A673 (cell line): ENCODE measurements at regions of chr13 and their contacts with region 1.

Region 1: DNA sequence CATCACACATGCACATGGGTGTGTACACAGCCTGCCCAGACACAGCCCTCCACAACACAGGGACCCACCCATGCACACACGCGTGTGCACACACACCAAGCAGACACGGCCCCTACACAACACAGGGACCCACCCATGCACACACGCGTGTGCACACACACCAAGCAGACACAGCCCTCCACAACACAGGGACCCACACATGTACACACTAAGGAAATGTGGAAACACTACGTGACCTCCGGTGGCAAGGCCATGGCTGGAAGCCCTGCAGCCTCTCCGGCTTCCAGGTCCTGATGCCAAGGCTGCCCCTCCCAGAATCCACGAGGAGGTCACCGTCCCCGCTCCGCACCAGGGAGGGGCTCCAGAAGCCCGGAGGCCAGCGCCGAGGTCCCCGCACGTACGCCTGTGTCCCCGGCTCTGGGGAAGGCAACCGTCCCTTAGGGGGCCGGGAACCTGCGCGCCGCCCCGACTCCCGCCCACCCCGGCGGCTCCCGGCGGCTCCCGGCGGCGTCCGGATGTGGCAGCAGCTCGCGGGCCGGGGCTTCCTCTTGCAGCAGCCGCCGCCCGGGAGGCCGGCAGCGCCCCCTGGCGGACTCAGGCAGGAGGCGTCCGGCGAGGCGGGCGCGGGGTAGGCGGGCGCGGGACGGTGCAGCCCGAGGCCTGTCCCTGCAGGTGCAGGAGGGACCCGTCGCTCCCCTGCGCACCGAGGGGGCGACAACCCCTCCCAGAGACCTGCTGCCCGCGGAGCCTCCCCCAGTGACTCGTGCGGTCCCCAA is 29.8 kb upstream of the GRTP1 start:
- DNase-seq: peak; percentile 88
- H3K4me3 ChIP-seq: peak overlapping the region; percentile 57
- H3K27ac ChIP-seq: peak overlapping the region; percentile 60
- H3K4me1 ChIP-seq: no peaks in the 10 kb centered on the region
- H3K27me3 ChIP-seq: no peaks in the 10 kb centered on the region
- CTCF ChIP-seq: peak; percentile 59

Region 2: DNA sequence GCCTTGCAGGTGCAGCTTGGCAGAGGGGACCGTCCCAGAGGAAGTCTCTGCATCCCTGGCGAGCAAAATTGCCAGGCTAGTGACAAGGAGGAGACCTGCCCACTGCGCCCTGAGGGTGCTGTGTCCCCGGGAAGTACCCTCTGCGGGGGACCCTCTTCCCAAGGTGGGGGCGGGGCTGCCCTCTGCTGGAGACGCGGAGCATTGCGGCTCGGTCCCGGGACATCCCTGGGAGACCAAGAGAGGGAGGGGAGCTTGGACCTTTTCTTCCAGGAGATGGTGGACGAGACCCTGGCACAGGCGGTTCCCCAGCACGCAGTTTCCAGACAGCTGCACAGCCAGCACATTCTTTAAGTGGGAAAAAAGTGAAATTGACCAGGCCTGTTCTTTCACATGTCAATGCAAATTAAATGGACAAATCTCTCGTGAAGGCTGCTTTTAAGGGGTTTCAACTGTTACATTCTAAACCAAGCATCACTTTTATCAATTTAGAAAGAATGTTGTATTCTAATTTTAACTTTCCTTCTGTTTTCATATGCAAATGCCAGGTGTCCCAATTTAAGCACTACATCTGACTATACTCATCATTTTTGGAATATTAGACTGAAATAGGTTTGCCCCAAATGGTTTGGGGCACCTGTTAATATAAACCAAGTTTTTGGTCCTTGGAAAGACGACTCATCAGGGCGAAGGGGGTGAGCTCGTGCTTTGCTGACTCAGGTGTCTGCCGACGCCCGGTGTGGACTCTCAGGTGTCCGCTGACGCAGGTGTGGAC is 364.1 kb before region 1 on chr13:
- CTCF ChIA-PET with region 1: interaction called, 4 read pairs
- POLR2A ChIA-PET with region 1: no interaction called
- intact Hi-C with region 1: loop called (anchors 2 kb)
- DNase-seq: peak; percentile 60
- H3K4me3 ChIP-seq: no peak overlapping the region
- H3K27ac ChIP-seq: no peak overlapping the region
- H3K4me1 ChIP-seq: no peaks in the 10 kb centered on the region
- H3K27me3 ChIP-seq: peaks cover 18% of the 10 kb centered on the region
- CTCF ChIP-seq: peak; percentile 95

Region 3: GRCh38 chr13:113275387-113275786 is 118.4 kb before region 1 on chr13:
- CTCF ChIA-PET with region 1: no interaction called
- POLR2A ChIA-PET with region 1: no interaction called
- intact Hi-C with region 1: loop called (anchors 2 kb)
- DNase-seq: peak; percentile 49
- H3K4me3 ChIP-seq: no peak overlapping the region
- H3K27ac ChIP-seq: no peak overlapping the region
- H3K4me1 ChIP-seq: no peaks in the 10 kb centered on the region
- H3K27me3 ChIP-seq: no peaks in the 10 kb centered on the region
- CTCF ChIP-seq: peak; percentile 58